ENCODE measurements at regions of chr10 and their contacts with region 1.

Region 1: GRCh38 chr10:123582084-123582989 is 83.8 kb upstream of the GPR26 start:
- H3K4me3 ChIP-seq: no peak overlapping the region
- H3K27ac ChIP-seq: no peak overlapping the region
- H3K4me1 ChIP-seq: 0 out of 2 replicates have a peak, but pooled peaks cover 2% of the 10 kb centered on the region
- CTCF ChIP-seq: peak; percentile 64

Region 2: DNA sequence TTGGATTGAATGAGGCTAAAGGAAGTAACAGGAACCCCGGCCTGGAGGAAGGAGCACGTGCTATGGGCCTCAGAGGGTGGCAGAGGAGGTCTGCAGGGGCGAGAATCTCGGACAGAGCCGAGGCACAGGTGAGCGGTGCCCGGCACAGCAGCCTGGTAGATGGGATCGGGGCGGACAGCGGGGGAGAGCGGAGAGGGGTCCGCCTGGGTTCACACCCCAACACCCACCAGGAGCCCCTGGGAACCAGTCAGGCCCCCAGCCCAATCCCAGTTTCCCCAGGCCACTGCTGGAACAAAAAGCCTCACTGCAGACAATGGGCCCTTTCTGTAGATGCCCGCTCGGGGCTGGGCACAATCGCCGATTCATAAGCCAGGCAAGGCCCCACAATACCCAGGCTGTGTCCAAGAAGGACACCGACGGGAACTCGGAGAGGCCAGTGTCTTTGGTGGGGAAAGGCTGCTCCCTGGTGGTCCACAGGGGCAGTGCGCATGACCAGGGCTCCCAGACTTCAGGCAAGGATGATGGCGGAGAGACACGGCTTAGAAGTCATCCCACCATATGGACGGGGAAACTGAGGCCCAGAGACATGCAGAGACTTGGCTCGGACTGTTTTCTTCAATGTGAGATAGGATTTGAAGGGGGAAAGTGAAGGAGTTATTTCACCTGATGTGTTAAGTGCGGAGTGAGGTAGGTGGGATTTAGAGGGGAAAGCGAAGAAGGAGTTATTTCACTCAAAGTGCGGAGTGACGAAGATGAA is 23.1 kb before region 1 on chr10:
- CTCF ChIA-PET with region 1: no interaction called
- POLR2A ChIA-PET with region 1: no interaction called
- H3K4me3 ChIP-seq: no peak overlapping the region
- H3K27ac ChIP-seq: no peak overlapping the region
- H3K4me1 ChIP-seq: no peaks in the 10 kb centered on the region
- CTCF ChIP-seq: peak; percentile 89

Region 3: DNA sequence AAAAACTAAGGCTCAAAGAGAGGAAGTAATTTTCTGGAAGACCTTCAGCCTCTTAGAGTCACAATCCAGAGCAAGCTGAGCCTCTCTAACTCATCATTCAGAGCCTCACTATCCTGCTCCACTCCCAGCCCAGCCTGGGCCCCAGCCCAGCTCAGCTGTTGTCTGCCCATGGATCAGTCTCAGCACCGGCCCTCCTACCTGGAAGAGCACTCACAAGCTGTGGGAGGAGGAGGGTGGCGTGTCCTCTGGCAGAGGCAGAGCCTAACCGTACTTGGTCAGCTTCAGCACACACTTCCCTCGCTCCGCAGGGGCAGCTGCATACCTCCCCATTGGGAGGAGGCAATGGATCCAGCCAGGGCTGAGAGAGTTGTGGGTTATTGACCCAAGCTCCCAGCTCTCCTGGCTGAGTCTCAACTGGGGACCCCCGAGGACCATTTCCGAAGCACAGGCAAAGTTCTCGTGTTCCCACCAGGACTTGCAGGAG is 17.1 kb after region 1 on chr10:
- CTCF ChIA-PET with region 1: interaction called, 13 read pairs
- POLR2A ChIA-PET with region 1: no interaction called
- H3K4me3 ChIP-seq: no peak overlapping the region
- H3K27ac ChIP-seq: no peak overlapping the region
- H3K4me1 ChIP-seq: no peaks in the 10 kb centered on the region
- CTCF ChIP-seq: no peak

Region 4: DNA sequence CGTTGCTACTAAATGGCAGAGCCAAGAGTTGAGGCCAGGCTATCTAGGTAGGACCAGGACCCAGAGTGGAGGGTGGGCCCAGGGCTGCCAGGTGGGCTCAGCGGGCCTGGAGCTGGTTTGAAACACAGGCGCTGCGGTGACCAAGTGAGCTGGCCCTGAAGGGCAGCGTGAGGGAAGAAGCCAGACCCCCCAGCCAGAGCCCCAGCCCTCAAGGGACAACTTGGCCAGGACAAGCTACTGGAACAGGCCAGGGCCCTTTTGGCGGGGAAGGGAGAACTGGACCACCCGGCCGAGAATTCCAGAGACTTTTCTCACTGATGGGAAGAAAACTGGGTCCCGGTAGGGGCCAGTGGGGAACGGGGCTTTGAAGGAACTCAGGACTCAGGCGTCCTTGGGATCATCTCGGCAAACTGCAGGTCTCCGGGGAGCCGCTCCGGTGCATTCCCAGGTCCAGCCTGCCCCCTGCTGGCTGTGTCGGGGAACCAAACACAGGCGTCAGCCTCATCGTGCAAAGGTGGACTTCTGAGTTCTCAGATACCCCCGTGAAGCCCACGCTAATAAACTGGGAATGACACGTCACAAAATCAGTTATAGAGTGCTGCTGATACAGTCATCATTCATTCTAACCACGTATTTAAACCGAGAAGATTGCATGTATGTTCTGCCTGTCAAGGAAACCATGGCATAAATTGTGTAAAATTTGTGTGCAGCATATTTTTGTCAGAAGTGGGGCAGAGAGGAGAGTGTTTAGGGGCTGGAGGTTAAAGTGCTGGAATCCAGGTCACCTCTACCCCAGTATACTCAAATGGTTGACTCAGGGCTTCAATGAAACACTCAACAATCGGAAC is 385.3 kb after region 1 on chr10:
- CTCF ChIA-PET with region 1: interaction called, 89 read pairs
- POLR2A ChIA-PET with region 1: interaction called, 4 read pairs
- H3K4me3 ChIP-seq: no peak overlapping the region
- H3K27ac ChIP-seq: no peak overlapping the region
- H3K4me1 ChIP-seq: no peaks in the 10 kb centered on the region
- CTCF ChIP-seq: peak; percentile 86